IMR-90 (cell line): ENCODE measurements at regions of chr16 and their contacts with region 1.

Region 1: DNA sequence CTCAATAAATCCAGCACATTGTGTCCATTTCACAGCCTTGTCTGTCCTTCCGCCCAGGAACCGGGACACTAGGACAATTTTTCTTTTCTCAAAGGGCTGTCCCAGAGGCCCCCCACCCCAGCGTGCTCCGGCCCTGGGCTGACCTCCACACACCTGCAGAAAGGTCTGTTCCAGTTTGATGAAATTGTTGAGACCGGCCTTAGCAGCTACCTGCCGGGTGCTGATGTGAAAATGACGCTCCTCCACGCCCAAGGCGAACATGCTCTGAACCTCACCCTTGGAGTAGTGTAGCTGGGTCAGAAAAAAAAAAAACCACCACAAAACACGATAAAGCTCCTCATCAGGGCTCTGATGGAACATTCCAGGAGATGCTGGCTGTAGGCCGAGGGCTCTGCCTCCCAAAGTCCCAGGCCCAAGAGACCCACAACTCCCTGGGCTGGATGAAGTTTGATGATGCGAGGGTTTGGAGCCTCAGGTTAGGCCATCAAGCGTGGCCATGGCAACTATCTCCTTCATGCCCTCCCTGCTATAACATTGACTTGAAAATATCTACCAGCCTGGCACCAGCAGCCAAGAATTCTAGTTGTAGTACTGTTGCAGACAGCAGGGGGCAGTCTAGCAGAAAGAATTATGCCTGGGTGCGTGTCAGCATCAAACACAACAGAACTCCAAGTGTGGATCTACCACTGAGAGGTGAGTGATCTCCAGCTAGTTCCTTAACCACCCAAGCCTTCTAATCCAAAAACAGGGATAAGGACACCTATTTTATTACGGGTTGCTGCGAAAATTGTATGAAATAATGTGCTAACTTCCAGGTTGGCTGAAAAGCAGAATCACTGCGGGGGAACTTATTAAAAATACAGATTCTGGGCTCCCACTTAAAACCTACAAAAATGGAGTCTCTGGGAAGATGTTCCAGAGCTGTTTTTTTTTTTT is 62.1 kb downstream of the RMI2 start:
- DNase-seq: peak; percentile 77
- ATAC-seq: peak; percentile 79
- H3K4me3 ChIP-seq: no peak overlapping the region
- H3K27ac ChIP-seq: no peak overlapping the region
- H3K4me1 ChIP-seq: peaks cover 11% of the 10 kb centered on the region
- H3K27me3 ChIP-seq: peaks cover 4% of the 10 kb centered on the region; the same call in 1 of the 2 replicates
- CTCF ChIP-seq: peak; percentile 82
- POLR2A ChIP-seq: no peak
- RAD21 ChIP-seq: peak; percentile 84

Region 2: GRCh38 chr16:10918294-10919002 is 488.9 kb before region 1 on chr16:
- CTCF ChIA-PET with region 1: no interaction called
- POLR2A ChIA-PET with region 1: no interaction called
- dilution Hi-C with region 1: no loop called
- in situ Hi-C with region 1: no loop called
- intact Hi-C with region 1: loop called (anchors 1 kb)
- DNase-seq: peak; percentile 92
- ATAC-seq: peak; percentile 98
- H3K4me3 ChIP-seq: no peak overlapping the region
- H3K27ac ChIP-seq: no peak overlapping the region
- H3K4me1 ChIP-seq: peaks cover 5% of the 10 kb centered on the region
- H3K27me3 ChIP-seq: peaks cover 4% of the 10 kb centered on the region; the same call in 1 of the 2 replicates
- CTCF ChIP-seq: peak; percentile 94
- POLR2A ChIP-seq: 0 out of 2 replicates have a peak, but pooled peaks have one; percentile 25
- RAD21 ChIP-seq: peak; percentile 93

Region 3: GRCh38 chr16:11201498-11202259 is 205.6 kb before region 1 on chr16:
- CTCF ChIA-PET with region 1: no interaction called
- POLR2A ChIA-PET with region 1: no interaction called
- dilution Hi-C with region 1: no loop called
- in situ Hi-C with region 1: no loop called
- intact Hi-C with region 1: no loop called
- DNase-seq: peak; percentile 93
- ATAC-seq: peak; percentile 77
- H3K4me3 ChIP-seq: no peak overlapping the region
- H3K27ac ChIP-seq: no peak overlapping the region; the same call in 1 of the 2 replicates
- H3K4me1 ChIP-seq: peaks cover 20% of the 10 kb centered on the region
- H3K27me3 ChIP-seq: no peaks in the 10 kb centered on the region; the same call in 1 of the 2 replicates
- CTCF ChIP-seq: no peak
- POLR2A ChIP-seq: no peak
- RAD21 ChIP-seq: peak; percentile 33

Region 4: GRCh38 chr16:11396241-11397048 is 10.9 kb before region 1 on chr16:
- CTCF ChIA-PET with region 1: interaction called, 10 read pairs
- POLR2A ChIA-PET with region 1: no interaction called
- dilution Hi-C with region 1: no loop called
- in situ Hi-C with region 1: no loop called
- intact Hi-C with region 1: no loop called
- DNase-seq: peak; percentile 60
- ATAC-seq: peak; percentile 99
- H3K4me3 ChIP-seq: no peak overlapping the region
- H3K27ac ChIP-seq: no peak overlapping the region
- H3K4me1 ChIP-seq: peaks cover 3% of the 10 kb centered on the region; the same call in 1 of the 2 replicates
- H3K27me3 ChIP-seq: peaks cover 2% of the 10 kb centered on the region; the same call in 1 of the 2 replicates
- CTCF ChIP-seq: peak; percentile 96
- POLR2A ChIP-seq: peak; percentile 50; the same call in 1 of the 2 replicates
- RAD21 ChIP-seq: peak; percentile 98

Region 5: DNA sequence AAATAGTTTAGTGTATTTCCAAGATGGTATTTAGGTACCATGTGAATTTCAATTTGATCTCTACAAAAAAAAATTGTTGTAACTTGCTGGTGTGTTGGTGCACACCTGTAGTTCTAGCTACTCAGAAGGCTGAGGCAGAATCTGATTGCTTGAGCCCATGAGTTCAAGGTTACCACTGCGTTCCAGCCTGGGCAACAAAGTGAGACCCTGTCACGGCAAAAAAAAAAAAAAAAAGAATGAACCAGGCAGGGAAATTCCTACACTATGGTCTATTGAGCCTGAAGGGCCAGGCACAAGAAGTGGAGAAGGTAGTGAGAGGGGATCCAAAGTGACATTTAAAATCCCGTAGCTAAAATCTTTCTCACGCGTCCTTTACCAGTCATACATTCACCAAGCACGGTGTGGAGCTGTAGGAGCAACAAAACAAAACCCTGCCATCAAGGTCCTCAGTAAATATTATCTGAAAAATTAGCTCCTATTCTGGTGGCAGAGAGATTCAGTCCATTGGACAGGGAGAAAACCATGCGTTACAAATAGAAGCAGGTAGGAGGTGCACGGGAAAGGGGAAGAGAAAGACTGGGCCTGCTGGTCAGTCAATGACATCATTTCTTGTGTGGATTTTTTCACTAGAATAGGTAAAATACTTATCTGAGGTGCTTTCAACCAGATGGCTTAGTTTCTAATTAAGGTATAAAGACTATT is 308.1 kb after region 1 on chr16:
- CTCF ChIA-PET with region 1: interaction called, 3 read pairs
- POLR2A ChIA-PET with region 1: no interaction called
- dilution Hi-C with region 1: no loop called
- in situ Hi-C with region 1: no loop called
- intact Hi-C with region 1: loop called (anchors 2 kb)
- DNase-seq: no peak
- ATAC-seq: no peak
- H3K4me3 ChIP-seq: no peak overlapping the region
- H3K27ac ChIP-seq: no peak overlapping the region
- H3K4me1 ChIP-seq: peaks cover 2% of the 10 kb centered on the region; the same call in 1 of the 2 replicates
- H3K27me3 ChIP-seq: no peaks in the 10 kb centered on the region
- CTCF ChIP-seq: no peak
- POLR2A ChIP-seq: no peak
- RAD21 ChIP-seq: no peak

Region 6: DNA sequence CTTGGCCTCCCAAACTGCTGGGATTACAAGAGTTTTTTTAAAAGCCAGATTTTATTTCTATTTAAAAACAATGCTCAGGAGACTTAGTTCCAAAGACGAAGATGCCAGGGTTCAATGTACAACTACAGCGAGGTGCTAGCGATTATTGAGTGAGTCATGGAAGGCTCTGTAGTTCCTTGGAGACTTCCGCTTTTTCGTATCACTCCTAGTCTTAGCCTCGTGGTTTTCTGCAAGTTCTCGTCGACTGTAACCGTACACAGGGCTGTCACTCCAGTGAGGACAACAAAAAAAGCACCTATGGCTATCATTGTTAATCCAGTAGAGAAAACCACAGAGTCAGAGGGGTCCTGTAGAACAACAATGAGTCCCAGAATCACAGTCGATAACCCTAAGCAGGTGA is 412.5 kb after region 1 on chr16:
- CTCF ChIA-PET with region 1: no interaction called
- POLR2A ChIA-PET with region 1: no interaction called
- dilution Hi-C with region 1: no loop called
- in situ Hi-C with region 1: loop called (anchors 10 kb)
- intact Hi-C with region 1: loop called (anchors 5 kb)
- DNase-seq: no peak
- ATAC-seq: no peak
- H3K4me3 ChIP-seq: no peak overlapping the region
- H3K27ac ChIP-seq: no peak overlapping the region
- H3K4me1 ChIP-seq: no peaks in the 10 kb centered on the region
- H3K27me3 ChIP-seq: no peaks in the 10 kb centered on the region
- CTCF ChIP-seq: no peak
- POLR2A ChIP-seq: no peak
- RAD21 ChIP-seq: no peak